Activated CD8-positive, alpha-beta memory T cell treated with anti-CD3 and anti-CD28 coated beads, Interleukin-2, amount 10 ng/mL, durations not matched to agents 7 days and 5 days (primary cell): ENCODE measurements at regions of chr6 and their contacts with region 1.

Region 1: GRCh38 chr6:148177589-148178233 is 164.9 kb upstream of the SASH1 start:
- DNase-seq: no peak
- ATAC-seq: no peak
- H3K4me3 Mint-ChIP-seq: no peak overlapping the region
- H3K27ac Mint-ChIP-seq: no peak overlapping the region
- H3K4me1 Mint-ChIP-seq: no peaks in the 10 kb centered on the region
- H3K27me3 Mint-ChIP-seq: peaks cover 12% of the 10 kb centered on the region

Region 2: DNA sequence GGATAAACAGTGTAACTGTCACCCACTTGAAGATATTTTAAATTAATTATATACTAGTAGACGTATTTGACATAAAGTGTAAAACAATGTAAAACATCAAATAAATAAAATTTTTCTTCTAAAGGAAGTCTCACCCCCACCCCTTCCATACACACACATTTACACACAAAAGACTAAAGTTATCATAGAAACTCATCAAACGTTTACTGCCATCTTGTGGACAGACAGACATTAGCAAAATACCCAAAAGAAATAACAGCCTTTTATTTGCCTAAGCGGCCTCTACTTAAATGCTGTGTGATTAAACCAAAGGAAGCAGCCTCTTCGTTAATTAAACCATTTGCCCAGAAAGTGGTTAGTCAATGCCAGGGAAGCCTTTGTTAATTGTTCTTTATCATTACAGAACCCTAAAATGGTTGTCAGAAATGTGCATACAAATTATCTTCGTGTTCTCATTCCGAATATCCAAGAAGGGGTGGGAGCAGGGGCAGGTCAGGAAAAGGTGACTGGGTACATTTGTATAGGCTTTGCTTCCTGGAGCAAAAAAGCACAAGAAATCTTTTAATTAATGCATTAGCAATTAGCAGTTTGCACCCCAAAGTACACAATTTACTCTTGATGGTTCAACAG is 11.3 kb before region 1 on chr6:
- CTCF ChIA-PET with region 1: interaction called, 10 read pairs
- DNase-seq: no peak
- ATAC-seq: no peak
- H3K4me3 Mint-ChIP-seq: no peak overlapping the region
- H3K27ac Mint-ChIP-seq: no peak overlapping the region
- H3K4me1 Mint-ChIP-seq: no peaks in the 10 kb centered on the region
- H3K27me3 Mint-ChIP-seq: peaks cover 11% of the 10 kb centered on the region

Region 3: GRCh38 chr6:148192310-148192709 is 14.6 kb after region 1 on chr6:
- CTCF ChIA-PET with region 1: no interaction called
- DNase-seq: no peak
- ATAC-seq: no peak
- H3K4me3 Mint-ChIP-seq: no peak overlapping the region
- H3K27ac Mint-ChIP-seq: no peak overlapping the region
- H3K4me1 Mint-ChIP-seq: no peaks in the 10 kb centered on the region
- H3K27me3 Mint-ChIP-seq: peaks cover 59% of the 10 kb centered on the region

Region 4: DNA sequence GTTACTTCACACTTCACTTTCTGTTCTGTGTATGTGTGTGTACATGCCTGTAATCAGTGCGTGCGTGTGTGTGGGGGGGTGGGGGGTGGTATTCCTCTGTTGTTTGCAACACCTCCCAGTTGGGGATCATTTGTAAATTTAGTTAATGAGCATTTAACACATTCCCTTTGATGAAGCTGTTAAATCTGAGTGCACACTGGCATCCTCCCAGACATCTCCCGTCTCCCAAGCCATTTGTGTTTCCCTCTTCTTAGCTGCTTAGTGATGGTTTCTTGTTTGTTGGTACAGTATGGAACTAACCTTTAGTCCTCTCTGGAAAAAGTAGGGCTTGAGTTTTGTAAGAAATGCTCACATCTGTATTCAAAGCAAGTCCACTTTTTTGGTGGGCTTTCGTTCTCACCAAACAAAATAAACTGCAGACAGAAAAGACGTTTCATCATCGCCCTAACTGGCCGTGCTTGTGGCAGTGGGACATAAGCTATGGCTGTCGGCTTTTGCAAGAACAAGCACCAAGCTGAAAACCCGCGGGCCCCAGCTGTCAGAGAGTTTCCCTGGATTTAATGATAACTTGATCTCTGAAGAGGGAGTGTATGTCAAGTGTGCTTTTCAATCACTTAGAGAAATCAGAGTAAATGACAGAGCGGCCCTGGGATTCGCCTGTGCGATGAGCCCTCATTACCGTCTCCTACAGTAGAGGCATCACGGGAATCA is 110.1 kb after region 1 on chr6:
- CTCF ChIA-PET with region 1: no interaction called
- DNase-seq: no peak
- ATAC-seq: no peak
- H3K4me3 Mint-ChIP-seq: no peak overlapping the region
- H3K27ac Mint-ChIP-seq: no peak overlapping the region
- H3K4me1 Mint-ChIP-seq: no peaks in the 10 kb centered on the region
- H3K27me3 Mint-ChIP-seq: peaks cover 2% of the 10 kb centered on the region

Region 5: DNA sequence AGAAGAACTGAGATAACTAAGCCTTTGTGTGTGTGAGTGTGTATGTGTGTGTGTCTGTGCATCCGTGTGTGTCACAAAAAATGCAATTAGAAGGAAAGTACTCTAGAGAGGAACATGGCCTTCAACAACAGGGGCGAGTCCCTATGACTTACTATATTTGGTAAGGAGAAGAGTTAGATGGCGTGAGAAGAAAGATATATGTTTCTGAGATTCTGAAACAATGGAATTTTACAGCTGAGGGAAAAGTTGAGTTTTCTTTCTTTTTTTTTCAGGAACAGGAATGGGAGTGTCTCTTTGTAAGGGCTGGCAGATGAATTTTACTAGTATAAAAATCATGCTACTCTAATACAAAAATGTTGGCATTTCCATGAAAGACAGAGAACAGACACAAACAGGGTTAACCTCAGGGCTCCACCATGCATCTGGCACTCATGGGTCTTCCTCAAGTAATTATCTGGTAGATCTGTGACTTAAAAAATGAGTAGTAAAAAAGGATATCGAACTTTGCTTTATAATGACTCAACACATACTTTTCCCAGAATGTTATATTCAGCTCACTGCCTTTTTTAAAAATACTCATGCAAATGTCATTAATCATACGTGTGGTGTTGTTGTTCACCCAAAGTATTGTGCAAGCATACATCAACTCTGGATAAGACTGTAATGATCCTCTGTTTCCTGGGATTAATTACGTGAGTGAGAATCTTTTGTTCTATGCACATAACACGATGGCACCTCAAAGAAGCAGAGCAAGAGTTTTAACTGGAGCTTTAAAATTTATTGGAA is 152.1 kb after region 1 on chr6:
- CTCF ChIA-PET with region 1: no interaction called
- DNase-seq: no peak
- ATAC-seq: no peak
- H3K4me3 Mint-ChIP-seq: no peak overlapping the region
- H3K27ac Mint-ChIP-seq: no peak overlapping the region
- H3K4me1 Mint-ChIP-seq: no peaks in the 10 kb centered on the region
- H3K27me3 Mint-ChIP-seq: peaks cover 22% of the 10 kb centered on the region

Region 6: GRCh38 chr6:148342107-148342356 is 164.3 kb after region 1 on chr6:
- CTCF ChIA-PET with region 1: no interaction called
- DNase-seq: no peak
- ATAC-seq: no peak
- H3K4me3 Mint-ChIP-seq: peak overlapping the region; percentile 46
- H3K27ac Mint-ChIP-seq: no peak overlapping the region
- H3K4me1 Mint-ChIP-seq: peaks cover 7% of the 10 kb centered on the region
- H3K27me3 Mint-ChIP-seq: peaks cover 56% of the 10 kb centered on the region

Region 7: GRCh38 chr6:148464319-148465010 is 286.8 kb after region 1 on chr6:
- CTCF ChIA-PET with region 1: interaction called, 19 read pairs
- DNase-seq: peak; percentile 62
- ATAC-seq: peak; percentile 69
- H3K4me3 Mint-ChIP-seq: no peak overlapping the region
- H3K27ac Mint-ChIP-seq: no peak overlapping the region
- H3K4me1 Mint-ChIP-seq: no peaks in the 10 kb centered on the region
- H3K27me3 Mint-ChIP-seq: peaks cover 28% of the 10 kb centered on the region